ENCODE measurements at regions of chr9 and their contacts with region 1.

Region 1: GRCh38 chr9:118595719-118596305 is 773.4 kb downstream of the BRINP1 start:
- DNase-seq: no peak
- ATAC-seq: no peak

Region 2: GRCh38 chr9:119365291-119366027 is 769.6 kb after region 1 on chr9:
- intact Hi-C with region 1: loop called (anchors 10 kb)
- DNase-seq: no peak
- ATAC-seq: no peak

Measured in Right ventricle myocardium superior (tissue), 1 donor.